T-cell (primary cell): ENCODE measurements at regions of chr7 and their contacts with region 1.

Region 1: GRCh38 chr7:6646941-6647479 is 9.9 kb downstream of the ZNF316 start:
- DNase-seq: no peak
- ATAC-seq: no peak
- H3K4me3 ChIP-seq: no peak overlapping the region
- H3K4me3 Mint-ChIP-seq: no peak overlapping the region
- H3K27ac ChIP-seq: no peak overlapping the region
- H3K27ac Mint-ChIP-seq: no peak overlapping the region
- H3K4me1 ChIP-seq: no peaks in the 10 kb centered on the region
- H3K4me1 Mint-ChIP-seq: no peaks in the 10 kb centered on the region
- H3K27me3 ChIP-seq: no peaks in the 10 kb centered on the region
- H3K27me3 Mint-ChIP-seq: no peaks in the 10 kb centered on the region

Region 2: DNA sequence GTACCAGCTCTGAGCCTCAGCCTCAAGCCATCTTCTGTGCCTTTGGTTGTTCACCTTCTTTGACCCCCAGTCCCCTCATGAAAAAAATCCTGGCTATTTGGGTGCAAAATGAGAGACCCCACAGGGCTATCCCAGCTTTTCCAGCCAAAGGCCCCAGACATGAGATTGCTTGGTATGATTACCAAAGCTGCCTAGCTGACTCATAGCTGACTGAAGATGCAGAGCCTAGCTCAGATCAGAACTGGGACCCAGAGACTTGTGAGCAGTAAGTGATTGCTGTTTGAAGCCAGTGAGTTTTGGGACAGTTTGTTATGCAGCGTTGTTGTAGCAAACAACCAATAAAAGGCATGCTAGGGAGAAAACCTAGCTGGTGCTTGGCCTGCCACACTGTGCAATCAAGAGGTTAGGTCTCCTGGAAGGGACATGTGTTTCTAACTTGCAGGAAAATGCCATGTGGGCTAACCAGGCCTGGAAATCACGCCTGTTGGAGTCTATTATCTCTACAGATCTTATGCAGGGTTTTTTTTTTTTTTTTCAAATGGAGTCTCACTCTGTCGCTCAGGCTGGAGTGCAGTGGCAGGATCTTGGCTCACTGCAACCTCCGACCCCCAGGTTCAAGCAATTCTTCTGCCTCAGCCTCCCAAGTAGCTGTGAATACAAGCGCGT is 151.3 kb before region 1 on chr7:
- CTCF ChIA-PET with region 1: no interaction called
- POLR2A ChIA-PET with region 1: no interaction called
- DNase-seq: no peak
- ATAC-seq: no peak
- H3K4me3 ChIP-seq: no peak overlapping the region
- H3K4me3 Mint-ChIP-seq: no peak overlapping the region
- H3K27ac ChIP-seq: no peak overlapping the region
- H3K27ac Mint-ChIP-seq: no peak overlapping the region
- H3K4me1 ChIP-seq: no peaks in the 10 kb centered on the region
- H3K4me1 Mint-ChIP-seq: no peaks in the 10 kb centered on the region
- H3K27me3 ChIP-seq: peaks cover 0 to 5% of the 10 kb centered on the region in 2 experiments
- H3K27me3 Mint-ChIP-seq: peaks cover 0 to 5% of the 10 kb centered on the region in 2 donors

Region 3: GRCh38 chr7:8305625-8306381 is 1658.8 kb after region 1 on chr7:
- CTCF ChIA-PET with region 1: no interaction called
- POLR2A ChIA-PET with region 1: interaction called in 1 of 2 experiments, 11 read pairs
- DNase-seq: no peak
- ATAC-seq: no peak
- H3K4me3 ChIP-seq: no peak overlapping the region
- H3K4me3 Mint-ChIP-seq: no peak overlapping the region
- H3K27ac ChIP-seq: no peak overlapping the region
- H3K27ac Mint-ChIP-seq: no peak overlapping the region
- H3K4me1 ChIP-seq: no peaks in the 10 kb centered on the region
- H3K4me1 Mint-ChIP-seq: no peaks in the 10 kb centered on the region
- H3K27me3 ChIP-seq: no peaks in the 10 kb centered on the region
- H3K27me3 Mint-ChIP-seq: peaks cover 15 to 18% of the 10 kb centered on the region in 2 donors